ENCODE measurements at regions of chr1 and their contacts with region 1.

Region 1: GRCh38 chr1:35857830-35858229 is 25.2 kb upstream of the AGO1 start:
- DNase-seq: no peak
- ATAC-seq: no peak
- H3K4me3 ChIP-seq: no peak overlapping the region
- H3K4me3 Mint-ChIP-seq: no peak overlapping the region
- H3K27ac ChIP-seq: no peak overlapping the region
- H3K27ac Mint-ChIP-seq: no peak overlapping the region
- H3K4me1 ChIP-seq: no peaks in the 10 kb centered on the region
- H3K4me1 Mint-ChIP-seq: no peaks in the 10 kb centered on the region
- H3K27me3 ChIP-seq: no peaks in the 10 kb centered on the region
- H3K27me3 Mint-ChIP-seq: no peaks in the 10 kb centered on the region

Region 2: DNA sequence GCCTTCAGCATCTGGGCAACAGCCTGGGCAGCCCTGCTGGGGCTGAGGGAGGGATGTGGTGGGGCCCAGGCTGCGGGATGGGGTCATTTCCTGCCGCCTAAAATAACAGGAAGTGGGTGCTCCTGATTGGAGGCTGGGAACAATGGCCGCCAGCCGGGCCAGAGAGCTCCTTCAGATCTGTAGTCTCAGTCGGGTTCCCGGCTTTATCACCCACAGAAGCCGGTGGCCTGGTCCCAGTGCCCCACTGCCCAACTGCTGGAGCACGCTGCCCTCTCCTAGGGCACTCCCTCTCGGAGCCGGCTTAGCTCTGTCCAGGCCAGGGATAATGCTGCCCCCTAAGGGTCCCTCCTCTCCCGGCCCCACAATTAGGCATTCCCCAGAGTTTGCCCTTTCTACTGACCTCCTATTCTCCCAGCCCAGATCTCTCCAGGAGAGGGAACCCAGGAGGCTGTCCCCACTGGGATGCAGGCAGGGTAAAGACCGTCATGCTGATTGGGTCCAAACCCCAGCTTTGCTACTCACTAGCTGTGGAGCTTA is 303.2 kb after region 1 on chr1:
- CTCF ChIA-PET with region 1: no interaction called
- POLR2A ChIA-PET with region 1: no interaction called
- DNase-seq: peak; percentile 45 to 77 (median 60)
- ATAC-seq: peak; percentile 36 to 61 (median 47)
- H3K4me3 ChIP-seq: peak overlapping the region; percentile 46 to 76
- H3K4me3 Mint-ChIP-seq: peak overlapping the region; percentile 77 to 82 (median 82)
- H3K27ac ChIP-seq: peak overlapping the region; percentile 89
- H3K27ac Mint-ChIP-seq: peak overlapping the region; percentile 96
- H3K4me1 ChIP-seq: peaks cover 58 to 84% of the 10 kb centered on the region in 2 experiments
- H3K4me1 Mint-ChIP-seq: peaks cover 69 to 76% (median 73%) of the 10 kb centered on the region in 3 donors
- H3K27me3 ChIP-seq: no peaks in the 10 kb centered on the region
- H3K27me3 Mint-ChIP-seq: no peaks in the 10 kb centered on the region

Region 3: GRCh38 chr1:37655274-37655673 is 1797.4 kb after region 1 on chr1:
- CTCF ChIA-PET with region 1: no interaction called
- POLR2A ChIA-PET with region 1: interaction called in 1 of 2 experiments, 15 read pairs
- DNase-seq: no peak
- ATAC-seq: no peak
- H3K4me3 ChIP-seq: no peak overlapping the region
- H3K4me3 Mint-ChIP-seq: no peak overlapping the region
- H3K27ac ChIP-seq: no peak overlapping the region
- H3K27ac Mint-ChIP-seq: no peak overlapping the region
- H3K4me1 ChIP-seq: no peaks in the 10 kb centered on the region
- H3K4me1 Mint-ChIP-seq: no peaks in the 10 kb centered on the region
- H3K27me3 ChIP-seq: peaks cover 0 to 25% of the 10 kb centered on the region in 2 experiments
- H3K27me3 Mint-ChIP-seq: peaks cover 5 to 13% of the 10 kb centered on the region in 2 donors